Lower leg skin (tissue), 4 donors: ENCODE measurements at regions of chr11 and their contacts with region 1.

Region 1: DNA sequence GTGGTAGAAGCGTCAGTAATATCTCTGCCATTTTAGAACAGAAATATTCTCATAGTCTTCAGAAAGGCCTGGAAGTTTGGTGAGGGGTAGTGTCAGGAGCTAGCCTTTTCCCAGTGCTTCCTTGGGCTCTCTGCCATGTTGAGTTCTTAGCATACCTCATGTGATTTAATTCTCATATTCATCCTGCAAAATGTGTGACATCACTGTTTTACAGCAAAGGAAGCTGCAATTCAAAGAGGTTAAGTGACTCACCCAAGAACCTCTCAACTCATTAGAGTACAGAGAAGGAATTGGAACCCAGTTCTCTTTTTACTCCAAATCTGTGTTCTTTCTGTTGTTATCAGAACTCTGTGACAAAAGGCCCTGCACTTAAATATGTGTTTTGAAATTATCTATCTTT is 72.1 kb downstream of the RNF169 start:
- DNase-seq: no peak
- H3K4me3 ChIP-seq: no peak overlapping the region
- CTCF ChIP-seq: no peak
- POLR2A ChIP-seq: no peak

Region 2: GRCh38 chr11:74710281-74710938 is 110.4 kb before region 1 on chr11:
- intact Hi-C with region 1: no loop called
- DNase-seq: no peak
- H3K4me3 ChIP-seq: no peak overlapping the region
- CTCF ChIP-seq: no peak
- POLR2A ChIP-seq: no peak

Region 3: DNA sequence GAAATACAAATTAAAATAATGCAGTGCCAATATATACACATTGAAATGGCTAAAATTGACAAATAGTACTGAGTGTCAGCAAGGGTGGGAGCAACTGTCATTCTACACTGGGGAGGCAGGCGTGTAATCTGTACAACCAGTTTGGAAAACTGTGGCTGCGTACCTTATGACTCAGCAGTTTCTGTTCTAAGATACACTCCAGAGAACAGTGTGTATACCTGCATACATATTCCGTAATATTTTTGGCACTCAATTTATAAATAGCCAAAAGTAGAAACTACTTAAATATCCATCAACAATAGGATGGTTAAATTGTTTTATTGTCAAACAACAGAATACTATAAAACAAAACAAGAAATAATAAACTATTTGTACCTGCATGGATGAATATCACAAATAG is 14.5 kb before region 1 on chr11:
- intact Hi-C with region 1: loop called (anchors 1 kb)
- DNase-seq: no peak
- H3K4me3 ChIP-seq: no peak overlapping the region
- CTCF ChIP-seq: no peak
- POLR2A ChIP-seq: no peak

Region 4: DNA sequence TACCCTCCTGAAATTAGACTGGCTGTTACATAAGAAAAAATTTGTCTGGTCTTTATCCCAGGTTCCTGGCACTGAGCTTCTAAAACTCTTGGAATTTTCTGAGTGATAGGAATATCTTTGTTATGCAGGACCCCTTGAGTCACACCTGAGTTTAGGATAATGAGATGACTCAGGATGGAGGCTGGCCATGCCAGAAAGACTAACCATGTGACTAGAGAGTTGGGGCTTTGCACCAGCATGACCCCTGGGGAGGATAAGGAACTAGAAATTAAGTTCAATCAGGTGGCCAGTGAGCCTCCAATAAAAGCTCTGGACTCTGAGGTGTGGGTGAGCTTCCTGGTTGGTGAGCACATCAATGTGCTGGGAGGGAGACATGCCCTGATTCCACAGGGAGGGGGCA is 40.0 kb after region 1 on chr11:
- intact Hi-C with region 1: no loop called
- DNase-seq: no peak
- H3K4me3 ChIP-seq: no peak overlapping the region
- CTCF ChIP-seq: no peak
- POLR2A ChIP-seq: no peak